T-cell (primary cell): ENCODE measurements at regions of chr6 and their contacts with region 1.

Region 1: DNA sequence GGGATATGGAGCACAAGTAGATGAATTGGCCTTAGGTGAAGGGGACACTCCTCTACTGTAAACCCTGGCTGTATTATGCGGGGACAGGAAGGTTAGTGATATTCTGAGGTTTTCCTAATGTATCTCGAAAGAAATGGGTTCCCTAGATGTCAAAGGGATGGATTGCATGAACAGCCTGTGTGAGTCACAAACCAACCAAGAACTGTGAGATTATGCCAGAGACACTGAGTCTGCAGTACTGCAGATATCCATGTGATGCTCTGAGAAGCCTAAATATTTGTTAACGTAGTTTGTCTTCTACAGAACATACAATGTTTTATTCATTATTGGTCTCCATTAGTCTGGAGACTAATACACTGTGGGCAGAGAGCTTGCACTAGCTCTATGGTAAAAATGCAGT is 182.2 kb downstream of the AKAP7 start:
- DNase-seq: no peak
- ATAC-seq: no peak
- H3K4me3 ChIP-seq: no peak overlapping the region
- H3K4me3 Mint-ChIP-seq: no peak overlapping the region
- H3K27ac ChIP-seq: no peak overlapping the region
- H3K27ac Mint-ChIP-seq: no peak overlapping the region
- H3K4me1 ChIP-seq: no peaks in the 10 kb centered on the region
- H3K4me1 Mint-ChIP-seq: peaks cover 0 to 2% (median 0%) of the 10 kb centered on the region in 3 donors
- H3K27me3 ChIP-seq: no peaks in the 10 kb centered on the region
- H3K27me3 Mint-ChIP-seq: no peaks in the 10 kb centered on the region

Region 2: DNA sequence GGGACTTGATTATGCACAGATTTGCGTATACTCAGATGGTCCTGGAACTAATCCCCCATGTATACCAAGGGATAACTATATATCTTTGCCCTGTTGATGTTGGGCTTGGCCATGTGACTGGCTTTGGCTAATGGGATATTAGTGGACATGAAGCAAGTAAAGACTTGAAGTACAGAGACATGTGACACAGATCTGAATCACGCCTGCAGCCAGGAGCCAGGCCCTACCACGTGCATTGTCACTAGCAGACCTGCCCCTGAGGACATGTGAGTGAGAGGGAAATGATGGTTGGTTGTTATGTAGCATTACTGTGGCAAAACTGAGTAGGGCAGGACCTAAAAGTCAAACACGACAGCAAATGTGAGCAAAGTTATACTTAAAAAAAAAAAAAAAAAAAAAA is 26.6 kb before region 1 on chr6:
- CTCF ChIA-PET with region 1: no interaction called
- POLR2A ChIA-PET with region 1: interaction called in 1 of 2 experiments, 15 read pairs
- DNase-seq: no peak
- ATAC-seq: no peak
- H3K4me3 ChIP-seq: no peak overlapping the region
- H3K4me3 Mint-ChIP-seq: no peak overlapping the region
- H3K27ac ChIP-seq: no peak overlapping the region
- H3K27ac Mint-ChIP-seq: peak overlapping the region in 1 of 2 donors; percentile 61
- H3K4me1 ChIP-seq: peaks cover 12 to 14% of the 10 kb centered on the region in 2 experiments
- H3K4me1 Mint-ChIP-seq: peaks cover 28 to 40% (median 34%) of the 10 kb centered on the region in 3 donors
- H3K27me3 ChIP-seq: no peaks in the 10 kb centered on the region
- H3K27me3 Mint-ChIP-seq: no peaks in the 10 kb centered on the region

Region 3: DNA sequence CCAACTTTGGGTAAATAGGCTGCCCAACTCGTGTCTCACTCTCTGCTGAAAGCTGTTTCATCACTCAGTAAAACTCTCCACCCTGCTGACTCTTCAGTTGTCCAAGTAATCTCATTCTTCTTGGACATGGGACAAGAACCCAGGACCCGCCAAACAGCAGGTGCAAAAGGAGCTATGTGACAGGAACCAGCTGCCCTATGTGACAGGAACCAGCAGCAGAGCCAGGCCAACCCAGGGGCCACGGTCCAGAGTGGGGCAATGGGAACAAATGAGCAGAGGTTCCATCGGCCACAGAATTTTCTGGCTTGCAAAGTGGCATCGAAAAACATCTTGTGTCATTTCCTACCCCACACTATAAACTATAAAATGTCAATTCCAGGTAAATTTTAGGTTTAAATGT is 1027.3 kb after region 1 on chr6:
- CTCF ChIA-PET with region 1: no interaction called
- POLR2A ChIA-PET with region 1: no interaction called
- DNase-seq: no peak
- ATAC-seq: no peak
- H3K4me3 ChIP-seq: no peak overlapping the region
- H3K4me3 Mint-ChIP-seq: no peak overlapping the region
- H3K27ac ChIP-seq: no peak overlapping the region
- H3K27ac Mint-ChIP-seq: no peak overlapping the region
- H3K4me1 ChIP-seq: no peaks in the 10 kb centered on the region
- H3K4me1 Mint-ChIP-seq: no peaks in the 10 kb centered on the region
- H3K27me3 ChIP-seq: no peaks in the 10 kb centered on the region
- H3K27me3 Mint-ChIP-seq: peaks cover 8% of the 10 kb centered on the region in 2 donors